Esophagus squamous epithelium (tissue), 5 donors: ENCODE measurements at regions of chr7 and their contacts with region 1.

Region 1: GRCh38 chr7:56009695-56010094 is 41.5 kb downstream of the PSPH start:
- DNase-seq: no peak
- H3K4me3 ChIP-seq: no peak overlapping the region
- H3K27ac ChIP-seq: peak overlapping the region in 2 of 4 donors; percentile 2 to 43
- H3K4me1 ChIP-seq: peaks cover 5 to 23% (median 9%) of the 10 kb centered on the region in 3 donors
- H3K27me3 ChIP-seq: no peaks in the 10 kb centered on the region
- CTCF ChIP-seq: peak in 2 of 6 experiments; percentile 11 to 14
- POLR2A ChIP-seq: no peak

Region 2: DNA sequence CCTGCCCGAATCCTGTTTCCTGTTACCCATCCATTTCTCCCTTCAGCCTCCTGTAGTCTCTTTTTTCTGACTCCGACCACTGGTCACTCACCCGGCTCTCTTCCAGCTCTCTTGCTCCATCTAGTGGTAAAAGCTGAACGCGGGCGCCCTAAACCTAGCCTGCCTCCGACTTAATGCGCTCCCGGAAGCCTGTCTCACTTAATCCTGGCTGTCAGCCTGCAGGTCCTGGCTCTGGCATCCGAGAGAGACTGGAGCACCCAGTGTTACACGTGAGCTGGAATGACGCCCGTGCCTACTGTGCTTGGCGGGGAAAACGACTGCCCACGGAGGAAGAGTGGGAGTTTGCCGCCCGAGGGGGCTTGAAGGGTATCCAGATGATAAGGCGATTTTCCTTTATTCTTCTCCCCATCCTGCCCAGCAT is 64.7 kb after region 1 on chr7:
- intact Hi-C with region 1: loop called (anchors 5 kb)
- DNase-seq: peak; percentile 18
- H3K4me3 ChIP-seq: no peak overlapping the region
- H3K27ac ChIP-seq: peak overlapping the region in 3 of 4 donors; percentile 33 to 49 (median 39)
- H3K4me1 ChIP-seq: peaks cover 3 to 21% (median 9%) of the 10 kb centered on the region in 3 donors
- H3K27me3 ChIP-seq: no peaks in the 10 kb centered on the region
- CTCF ChIP-seq: peak; percentile 87 to 97 (median 94)
- POLR2A ChIP-seq: no peak